Endothelial cell of umbilical vein (primary cell): ENCODE measurements at regions of chr10 and their contacts with region 1.

Region 1: GRCh38 chr10:128211953-128212727 is 85.9 kb upstream of the MKI67 start:
- DNase-seq: peak; percentile 72
- H3K4me3 ChIP-seq: no peak overlapping the region
- H3K27ac ChIP-seq: no peak overlapping the region
- H3K4me1 ChIP-seq: peaks cover 9% of the 10 kb centered on the region
- H3K27me3 ChIP-seq: no peaks in the 10 kb centered on the region
- CTCF ChIP-seq: peak; percentile 99 to 100
- POLR2A ChIP-seq: no peak

Region 2: DNA sequence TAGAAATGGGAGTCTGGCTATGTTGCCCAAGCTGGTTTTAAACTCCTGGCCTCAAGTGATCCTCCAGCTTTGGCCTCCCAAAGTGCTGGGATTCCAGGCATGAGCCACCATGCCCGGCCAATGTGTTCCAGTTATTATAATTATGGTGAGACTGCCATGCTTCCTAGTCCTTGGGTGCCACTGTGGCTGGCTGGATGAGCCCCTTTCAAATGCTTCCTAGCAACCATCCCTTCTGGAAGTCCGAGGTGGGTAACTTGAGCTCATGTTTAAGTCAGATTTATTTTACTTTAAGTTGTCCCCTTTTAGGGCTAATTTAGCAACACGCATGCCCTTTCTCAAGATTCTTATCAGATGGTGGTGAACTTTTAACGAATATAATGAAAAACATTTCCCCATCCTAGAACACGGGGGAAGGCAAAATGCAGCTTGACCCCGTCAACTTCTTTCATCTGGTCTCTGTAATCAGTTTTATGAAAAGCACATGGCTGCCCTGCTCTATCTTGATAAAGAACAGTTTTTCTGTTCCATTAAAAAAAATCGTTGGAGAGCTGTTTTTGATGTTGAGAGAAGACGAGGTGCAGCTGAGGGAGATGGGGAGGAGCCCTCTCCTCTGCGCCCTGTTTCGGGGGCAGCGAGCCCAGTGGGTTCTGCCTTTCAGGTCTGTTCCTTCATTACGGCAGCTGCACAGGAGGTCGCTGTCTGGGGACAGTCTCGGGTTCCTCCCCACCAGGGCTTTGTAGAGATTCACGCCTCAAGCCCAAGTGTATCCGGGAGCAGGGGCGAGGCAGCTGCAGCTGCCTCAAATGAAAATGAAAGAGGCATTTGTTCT is 25.0 kb before region 1 on chr10:
- CTCF ChIA-PET with region 1: interaction called, 10 read pairs
- POLR2A ChIA-PET with region 1: no interaction called
- dilution Hi-C with region 1: no loop called
- intact Hi-C with region 1: no loop called
- DNase-seq: no peak
- H3K4me3 ChIP-seq: no peak overlapping the region
- H3K27ac ChIP-seq: no peak overlapping the region
- H3K4me1 ChIP-seq: no peaks in the 10 kb centered on the region
- H3K27me3 ChIP-seq: peaks cover 0 to 10% of the 10 kb centered on the region in 2 experiments
- CTCF ChIP-seq: no peak
- POLR2A ChIP-seq: no peak

Region 3: DNA sequence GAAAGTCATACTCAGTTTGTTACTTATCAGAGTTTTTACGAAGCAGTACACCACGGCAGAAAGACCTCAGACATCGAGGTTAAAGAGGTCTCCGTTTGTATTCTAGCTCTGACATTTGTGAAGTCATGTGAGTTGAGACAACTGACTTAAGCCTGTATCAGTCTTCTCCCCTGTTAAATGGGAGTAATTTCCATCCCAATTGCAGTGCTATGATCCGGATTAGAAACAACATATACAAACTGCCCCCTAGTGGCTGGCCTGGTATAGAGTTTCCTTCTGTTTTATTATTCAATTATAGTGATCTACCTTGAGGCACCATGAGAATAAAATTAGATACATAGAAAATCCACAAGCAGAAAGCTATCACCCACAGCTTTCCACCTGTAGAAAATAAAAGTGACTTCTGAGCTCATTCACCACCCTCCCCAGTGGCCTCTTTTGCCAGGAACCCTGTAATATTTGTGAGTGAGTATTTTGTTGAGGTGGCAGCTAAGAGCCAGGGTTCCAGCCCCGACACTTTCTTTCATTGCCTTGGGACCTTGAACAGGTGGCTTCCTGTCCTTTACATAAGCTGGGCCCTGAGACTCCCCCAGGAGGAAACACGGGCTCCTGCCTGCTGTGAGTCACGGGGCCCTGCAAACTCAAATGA is 647.7 kb after region 1 on chr10:
- CTCF ChIA-PET with region 1: no interaction called
- POLR2A ChIA-PET with region 1: no interaction called
- dilution Hi-C with region 1: no loop called
- intact Hi-C with region 1: loop called (anchors 1 kb)
- DNase-seq: no peak
- H3K4me3 ChIP-seq: no peak overlapping the region
- H3K27ac ChIP-seq: no peak overlapping the region
- H3K4me1 ChIP-seq: no peaks in the 10 kb centered on the region
- H3K27me3 ChIP-seq: no peaks in the 10 kb centered on the region
- CTCF ChIP-seq: peak; percentile 27 to 40
- POLR2A ChIP-seq: no peak

Region 4: GRCh38 chr10:129361676-129362376 is 1149.7 kb after region 1 on chr10:
- CTCF ChIA-PET with region 1: no interaction called
- POLR2A ChIA-PET with region 1: no interaction called
- dilution Hi-C with region 1: no loop called
- intact Hi-C with region 1: no loop called
- DNase-seq: no peak
- H3K4me3 ChIP-seq: no peak overlapping the region
- H3K27ac ChIP-seq: no peak overlapping the region
- H3K4me1 ChIP-seq: no peaks in the 10 kb centered on the region
- H3K27me3 ChIP-seq: no peaks in the 10 kb centered on the region
- CTCF ChIP-seq: no peak
- POLR2A ChIP-seq: no peak